ENCODE measurements at regions of chr3 and their contacts with region 1.

Region 1: GRCh38 chr3:43998836-43999727 is 242.6 kb upstream of the TOPAZ1 start:
- DNase-seq: peak; percentile 92
- H3K4me3 ChIP-seq: peak overlapping the region; percentile 93
- H3K27ac ChIP-seq: peak overlapping the region; percentile 14
- H3K4me1 ChIP-seq: peaks cover 52% of the 10 kb centered on the region
- CTCF ChIP-seq: no peak

Region 2: DNA sequence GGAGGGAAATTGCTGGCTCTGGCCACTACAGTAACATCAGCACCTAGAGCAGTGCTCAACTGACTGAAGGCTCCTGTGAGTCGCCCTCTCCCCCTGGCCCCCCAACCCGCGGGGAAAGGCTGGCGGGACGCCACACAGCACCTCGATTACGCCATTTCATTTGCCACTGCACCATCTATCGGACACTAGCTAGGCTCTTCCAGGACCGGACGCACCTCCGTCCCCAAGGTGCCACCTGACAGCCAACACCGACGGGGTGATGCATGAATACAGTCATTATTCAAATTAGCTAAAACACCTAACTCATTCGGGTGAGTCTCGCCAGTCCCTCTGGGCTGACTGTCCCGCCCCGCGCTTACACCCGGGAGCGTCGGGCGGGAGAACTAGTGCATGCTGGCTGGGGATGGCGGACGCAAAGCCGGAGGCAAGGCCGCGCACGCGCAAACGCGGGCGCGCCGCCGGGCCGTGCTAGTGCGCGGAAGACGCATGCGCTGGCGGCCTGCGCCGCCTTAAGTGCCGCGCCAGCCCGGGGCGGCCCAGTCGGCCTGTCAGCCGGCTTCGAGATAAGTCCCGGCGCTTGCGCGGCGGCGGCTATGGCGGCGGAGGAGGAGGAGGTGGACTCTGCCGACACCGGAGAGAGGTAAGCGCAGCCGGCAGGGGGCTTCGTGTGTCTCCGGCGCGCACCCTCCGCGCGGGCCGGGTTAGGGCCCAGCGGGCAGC is 308.5 kb before region 1 on chr3 and contains the start of gene ABHD5:
- CTCF ChIA-PET with region 1: no interaction called
- POLR2A ChIA-PET with region 1: no interaction called
- intact Hi-C with region 1: loop called (anchors 5 kb)
- DNase-seq: peak; percentile 94
- H3K4me3 ChIP-seq: peak within 1 kb of the TSS; percentile 73
- H3K27ac ChIP-seq: peak within 1 kb of the TSS; percentile 11
- H3K4me1 ChIP-seq: peaks cover 20% of the 10 kb centered on the region
- CTCF ChIP-seq: no peak
- total RNA-seq, gene ABHD5: 6.5 and 7.3 TPM in 2 replicates

Region 3: GRCh38 chr3:43879166-43879565 is 119.9 kb before region 1 on chr3:
- CTCF ChIA-PET with region 1: no interaction called
- POLR2A ChIA-PET with region 1: no interaction called
- intact Hi-C with region 1: loop called (anchors 1 kb)
- DNase-seq: peak; percentile 73
- H3K4me3 ChIP-seq: no peak overlapping the region
- H3K27ac ChIP-seq: no peak overlapping the region
- H3K4me1 ChIP-seq: peaks cover 22% of the 10 kb centered on the region
- CTCF ChIP-seq: peak; percentile 81

Region 4: DNA sequence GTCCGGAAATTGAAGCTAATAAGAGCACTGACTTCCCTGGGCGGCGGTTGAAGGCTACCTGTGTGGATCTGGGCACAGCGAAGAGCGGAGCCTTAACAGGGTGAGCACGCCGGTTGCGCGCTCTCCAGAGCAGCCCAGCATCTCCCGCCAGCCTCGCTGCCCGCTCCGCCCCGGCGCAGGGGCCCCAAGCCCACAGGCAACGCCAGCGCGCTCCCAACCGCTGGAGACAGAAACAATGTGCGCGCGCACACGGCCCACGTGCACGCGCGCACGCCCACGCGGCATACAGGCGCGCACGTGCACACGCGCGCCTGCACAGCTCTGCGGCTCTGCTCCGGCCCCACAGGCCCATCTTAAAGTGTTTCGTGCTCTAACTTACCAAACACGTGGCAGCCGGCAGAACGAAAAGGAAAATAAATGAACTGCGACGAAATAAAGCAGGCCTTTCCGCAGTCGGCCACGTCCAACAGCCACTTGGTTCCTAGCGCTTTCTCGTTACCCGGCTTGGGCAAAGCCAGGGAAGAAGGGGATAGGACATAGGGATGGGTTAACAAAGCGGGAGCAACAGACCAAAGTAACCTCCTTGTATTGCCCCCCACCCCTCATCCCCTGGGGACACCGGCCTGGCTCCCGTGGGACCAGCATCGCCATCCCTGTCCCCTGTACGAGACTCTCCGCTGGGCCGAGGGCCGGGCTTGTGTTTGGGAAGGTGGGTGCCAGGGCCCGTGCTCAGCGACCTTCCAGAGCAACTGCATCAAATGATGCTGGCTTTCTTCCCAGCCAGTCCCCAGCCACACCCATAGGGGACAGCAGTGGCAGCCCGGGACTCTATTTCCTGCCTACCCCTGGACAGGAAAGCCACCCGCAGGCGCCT is 104.7 kb before region 1 on chr3:
- CTCF ChIA-PET with region 1: no interaction called
- POLR2A ChIA-PET with region 1: interaction called, 4 read pairs
- intact Hi-C with region 1: loop called (anchors 1 kb)
- DNase-seq: peak; percentile 89
- H3K4me3 ChIP-seq: peak overlapping the region; percentile 60
- H3K27ac ChIP-seq: peak overlapping the region; percentile 97
- H3K4me1 ChIP-seq: peaks cover 60% of the 10 kb centered on the region
- CTCF ChIP-seq: no peak

Region 5: DNA sequence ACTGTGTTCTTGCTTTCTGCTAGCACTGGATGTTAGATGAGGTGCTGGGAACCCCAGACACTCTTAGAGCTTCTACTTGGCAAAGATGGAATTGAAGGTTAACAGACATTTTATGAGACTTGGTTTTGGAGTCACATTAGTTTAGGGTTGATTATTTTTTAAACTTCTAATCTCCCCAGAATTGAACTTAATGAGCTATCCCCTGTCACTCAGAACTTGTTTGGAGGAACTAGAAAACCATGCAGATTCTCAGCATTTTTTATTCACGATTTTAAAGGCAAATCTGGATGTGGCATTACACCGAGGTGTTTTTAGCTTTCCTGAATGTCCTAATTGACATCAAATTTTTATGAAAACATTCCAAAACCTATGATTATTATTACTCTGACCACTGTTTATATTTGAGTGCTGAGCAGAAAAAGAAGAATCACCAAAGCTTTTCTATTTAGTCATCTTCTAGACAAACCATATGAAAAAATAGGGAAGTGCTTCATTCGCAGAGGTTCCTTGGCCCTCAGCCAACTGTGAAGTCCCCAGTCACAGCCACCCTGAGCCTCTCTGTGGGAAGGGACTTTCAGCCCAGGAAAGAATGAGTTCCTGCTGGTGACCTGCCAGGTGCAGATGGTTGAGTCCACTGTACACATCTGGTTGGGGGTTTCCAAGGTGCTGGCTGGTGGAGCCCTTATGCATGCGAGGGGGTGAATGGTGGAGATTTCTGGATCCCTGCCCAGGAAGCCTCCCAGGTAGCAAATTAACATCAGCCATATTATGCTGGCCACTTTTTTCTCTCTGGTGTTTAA is 46.6 kb after region 1 on chr3:
- CTCF ChIA-PET with region 1: no interaction called
- POLR2A ChIA-PET with region 1: interaction called, 3 read pairs
- intact Hi-C with region 1: loop called (anchors 2 kb)
- DNase-seq: peak; percentile 92
- H3K4me3 ChIP-seq: peak overlapping the region; percentile 13
- H3K27ac ChIP-seq: peak overlapping the region; percentile 40
- H3K4me1 ChIP-seq: peaks cover 30% of the 10 kb centered on the region
- CTCF ChIP-seq: no peak

Region 6: GRCh38 chr3:44198284-44199269 is 199.5 kb after region 1 on chr3:
- CTCF ChIA-PET with region 1: no interaction called
- POLR2A ChIA-PET with region 1: no interaction called
- intact Hi-C with region 1: loop called (anchors 1 kb)
- DNase-seq: peak; percentile 79
- H3K4me3 ChIP-seq: no peak overlapping the region
- H3K27ac ChIP-seq: no peak overlapping the region
- H3K4me1 ChIP-seq: no peaks in the 10 kb centered on the region
- CTCF ChIP-seq: peak; percentile 91

Region 7: DNA sequence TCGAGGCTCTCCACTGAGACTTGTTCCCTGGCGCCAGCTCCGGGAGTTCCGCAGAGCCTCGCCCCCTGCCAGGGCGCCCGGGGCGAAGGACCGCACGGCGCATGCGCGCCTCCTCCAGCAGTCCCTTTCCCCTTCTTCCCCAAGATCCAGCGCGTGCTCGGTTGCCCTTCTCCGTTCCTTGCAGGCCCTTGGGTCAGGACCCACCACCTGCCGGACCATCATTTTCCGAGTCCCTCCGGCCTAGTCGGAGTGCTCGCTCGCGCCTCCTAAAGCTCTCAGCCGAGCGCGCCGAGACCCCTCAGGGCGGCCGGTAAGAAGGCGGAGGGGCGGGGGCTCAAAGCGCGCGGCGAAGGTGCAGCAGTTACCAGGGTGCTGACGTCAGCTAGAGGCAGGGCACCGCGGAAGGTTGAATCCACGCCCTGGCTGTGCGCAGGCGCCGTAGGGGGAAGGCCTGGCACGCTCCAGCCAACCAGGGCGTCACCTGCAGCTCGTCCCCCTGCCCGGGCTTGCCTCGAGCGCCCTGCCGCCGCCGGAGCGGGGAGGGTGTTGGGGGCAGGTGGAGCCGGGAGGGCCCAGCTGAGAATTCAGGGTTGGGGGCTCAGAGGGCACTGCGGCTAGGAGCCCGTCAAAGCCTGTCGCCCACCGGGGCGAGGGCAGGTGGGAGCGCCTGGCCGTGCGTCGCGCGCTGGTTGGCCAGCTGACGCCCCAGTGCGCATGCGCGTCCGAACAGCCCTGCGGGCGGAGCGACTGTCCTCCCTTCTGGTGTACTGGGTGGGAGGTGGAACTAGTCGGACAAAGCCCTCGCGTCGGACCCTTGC is 339.1 kb after region 1 on chr3 and contains the start of gene TCAIM:
- CTCF ChIA-PET with region 1: no interaction called
- POLR2A ChIA-PET with region 1: no interaction called
- intact Hi-C with region 1: loop called (anchors 5 kb)
- DNase-seq: peak; percentile 98
- H3K4me3 ChIP-seq: peak within 1 kb of the TSS; percentile 82
- H3K27ac ChIP-seq: peak within 1 kb of the TSS; percentile 71
- H3K4me1 ChIP-seq: peaks cover 23% of the 10 kb centered on the region
- CTCF ChIP-seq: no peak
- total RNA-seq, gene TCAIM: 15.2 and 17.9 TPM in 2 replicates